Right lobe of liver (tissue), 6 donors: ENCODE measurements at regions of chr10 and their contacts with region 1.

Region 1: GRCh38 chr10:73879296-73880173 is 5.2 kb upstream of the CAMK2G start:
- DNase-seq: peak; percentile 88 to 91 (median 90)
- ATAC-seq: peak; percentile 95 to 98 (median 98)
- H3K4me3 ChIP-seq: no peak overlapping the region
- H3K27ac ChIP-seq: no peak overlapping the region
- H3K4me1 ChIP-seq: no peaks in the 10 kb centered on the region
- H3K27me3 ChIP-seq: no peaks in the 10 kb centered on the region
- CTCF ChIP-seq: peak; percentile 94 to 97 (median 96)
- POLR2A ChIP-seq: no peak

Region 2: DNA sequence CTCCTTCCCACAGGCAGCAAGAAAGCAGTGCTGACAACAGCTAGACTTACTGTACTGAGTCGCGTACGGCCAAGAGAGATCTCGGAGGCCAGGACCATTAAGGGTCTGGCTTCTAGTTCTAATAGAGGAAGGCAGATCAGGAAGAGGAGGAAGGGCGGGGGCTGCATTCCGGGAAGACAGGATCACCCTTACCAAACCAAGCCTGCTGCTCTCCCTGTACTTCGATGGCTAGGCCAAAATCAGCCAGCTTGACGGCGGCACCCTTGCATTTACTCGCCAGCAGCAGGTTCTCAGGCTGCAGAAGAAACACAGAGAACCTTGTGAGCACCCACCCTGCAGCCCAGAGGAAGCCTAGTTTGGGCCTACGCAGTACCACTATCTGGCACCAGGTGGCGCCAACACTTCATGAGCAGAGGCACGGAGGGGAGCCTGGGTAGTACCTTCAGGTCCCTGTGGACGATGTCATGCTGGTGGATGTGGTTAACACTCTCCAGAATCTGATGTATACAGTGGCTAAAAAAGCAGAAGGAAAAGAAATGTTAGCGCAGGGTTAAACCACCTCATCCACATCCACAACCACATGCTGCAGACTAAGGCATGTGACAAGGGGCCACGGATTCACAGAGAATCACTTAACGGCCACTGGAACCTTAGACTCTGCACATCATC is 30.6 kb before region 1 on chr10:
- intact Hi-C with region 1: loop called (anchors 2 to 5 kb)
- DNase-seq: peak; percentile 81 to 84 (median 82)
- ATAC-seq: peak; percentile 95 to 99 (median 97)
- H3K4me3 ChIP-seq: no peak overlapping the region
- H3K27ac ChIP-seq: no peak overlapping the region
- H3K4me1 ChIP-seq: peaks cover 0 to 1% (median 0%) of the 10 kb centered on the region in 4 donors
- H3K27me3 ChIP-seq: no peaks in the 10 kb centered on the region
- CTCF ChIP-seq: peak; percentile 98 to 99 (median 98)
- POLR2A ChIP-seq: no peak

Region 3: GRCh38 chr10:73940634-73941221 is 61.2 kb after region 1 on chr10:
- intact Hi-C with region 1: loop called in 1 of 2 experiments (anchors 10 kb)
- DNase-seq: peak; percentile 78 to 89 (median 86)
- ATAC-seq: peak; percentile 95 to 98 (median 98)
- H3K4me3 ChIP-seq: peak overlapping the region in 1 of 3 donors; percentile 10
- H3K27ac ChIP-seq: no peak overlapping the region
- H3K4me1 ChIP-seq: no peaks in the 10 kb centered on the region
- H3K27me3 ChIP-seq: no peaks in the 10 kb centered on the region
- CTCF ChIP-seq: peak; percentile 83 to 93 (median 87)
- POLR2A ChIP-seq: no peak

Region 4: GRCh38 chr10:74096777-74097176 is 217.2 kb after region 1 on chr10:
- intact Hi-C with region 1: loop called in 1 of 2 experiments (anchors 10 kb)
- DNase-seq: no peak
- ATAC-seq: no peak
- H3K4me3 ChIP-seq: no peak overlapping the region
- H3K27ac ChIP-seq: peak overlapping the region in 1 of 3 donors; percentile 13
- H3K4me1 ChIP-seq: peaks cover 0 to 14% (median 4%) of the 10 kb centered on the region in 4 donors
- H3K27me3 ChIP-seq: no peaks in the 10 kb centered on the region
- CTCF ChIP-seq: no peak
- POLR2A ChIP-seq: no peak